ENCODE measurements at regions of chr12 and their contacts with region 1.

Region 1: GRCh38 chr12:52691076-52691840 is 11.1 kb upstream of the KRT1 start:
- DNase-seq: peak; percentile 22 to 78 (median 65)
- ATAC-seq: peak; percentile 84
- H3K4me3 ChIP-seq: peak overlapping the region; percentile 44 to 47
- H3K4me3 Mint-ChIP-seq: peak overlapping the region; percentile 84
- H3K27ac ChIP-seq: no peak overlapping the region
- H3K27ac Mint-ChIP-seq: peak overlapping the region; percentile 89
- H3K4me1 ChIP-seq: peaks cover 19% of the 10 kb centered on the region
- H3K4me1 Mint-ChIP-seq: peaks cover 42% of the 10 kb centered on the region
- H3K27me3 ChIP-seq: no peaks in the 10 kb centered on the region
- H3K27me3 Mint-ChIP-seq: no peaks in the 10 kb centered on the region
- CTCF ChIP-seq: no peak

Region 2: GRCh38 chr12:52126605-52127578 is 564.4 kb before region 1 on chr12:
- CTCF ChIA-PET with region 1: no interaction called
- POLR2A ChIA-PET with region 1: no interaction called
- intact Hi-C with region 1: no loop called
- DNase-seq: peak in 1 of 9 experiments; percentile 8
- ATAC-seq: no peak
- H3K4me3 ChIP-seq: no peak overlapping the region
- H3K4me3 Mint-ChIP-seq: no peak overlapping the region
- H3K27ac ChIP-seq: no peak overlapping the region
- H3K27ac Mint-ChIP-seq: no peak overlapping the region
- H3K4me1 ChIP-seq: no peaks in the 10 kb centered on the region
- H3K4me1 Mint-ChIP-seq: no peaks in the 10 kb centered on the region
- H3K27me3 ChIP-seq: peaks cover 0 to 3% of the 10 kb centered on the region in 2 experiments
- H3K27me3 Mint-ChIP-seq: peaks cover 24% of the 10 kb centered on the region
- CTCF ChIP-seq: no peak

Region 3: GRCh38 chr12:52675301-52675701 is 16.0 kb before region 1 on chr12:
- CTCF ChIA-PET with region 1: interaction called, 4 read pairs
- POLR2A ChIA-PET with region 1: interaction called, 13 read pairs
- intact Hi-C with region 1: no loop called
- DNase-seq: peak in 1 of 9 experiments; percentile 23
- ATAC-seq: no peak
- H3K4me3 ChIP-seq: no peak overlapping the region
- H3K4me3 Mint-ChIP-seq: no peak overlapping the region
- H3K27ac ChIP-seq: no peak overlapping the region
- H3K27ac Mint-ChIP-seq: no peak overlapping the region
- H3K4me1 ChIP-seq: peaks cover 5% of the 10 kb centered on the region
- H3K4me1 Mint-ChIP-seq: peaks cover 7% of the 10 kb centered on the region
- H3K27me3 ChIP-seq: no peaks in the 10 kb centered on the region
- H3K27me3 Mint-ChIP-seq: no peaks in the 10 kb centered on the region
- CTCF ChIP-seq: no peak

Measured in CD8-positive, alpha-beta T cell (primary cell).